CD14-positive monocyte (primary cell): ENCODE measurements at regions of chr19 and their contacts with region 1.

Region 1: GRCh38 chr19:17539238-17540117 is 16.0 kb upstream of the COLGALT1 start:
- DNase-seq: peak; percentile 94 to 98 (median 97)
- H3K4me3 ChIP-seq: peak overlapping the region; percentile 33 to 74 (median 56)
- H3K4me3 Mint-ChIP-seq: peak overlapping the region; percentile 87 to 93
- H3K27ac ChIP-seq: no peak overlapping the region
- H3K27ac Mint-ChIP-seq: peak overlapping the region in 4 of 7 donors; percentile 44 to 83 (median 48)
- H3K4me1 ChIP-seq: peaks cover 16 to 25% of the 10 kb centered on the region in 2 donors
- H3K4me1 Mint-ChIP-seq: peaks cover 32% of the 10 kb centered on the region
- H3K27me3 ChIP-seq: no peaks in the 10 kb centered on the region
- H3K27me3 Mint-ChIP-seq: peaks cover 3 to 8% (median 7%) of the 10 kb centered on the region in 3 donors
- CTCF ChIP-seq: peak; percentile 44

Region 2: DNA sequence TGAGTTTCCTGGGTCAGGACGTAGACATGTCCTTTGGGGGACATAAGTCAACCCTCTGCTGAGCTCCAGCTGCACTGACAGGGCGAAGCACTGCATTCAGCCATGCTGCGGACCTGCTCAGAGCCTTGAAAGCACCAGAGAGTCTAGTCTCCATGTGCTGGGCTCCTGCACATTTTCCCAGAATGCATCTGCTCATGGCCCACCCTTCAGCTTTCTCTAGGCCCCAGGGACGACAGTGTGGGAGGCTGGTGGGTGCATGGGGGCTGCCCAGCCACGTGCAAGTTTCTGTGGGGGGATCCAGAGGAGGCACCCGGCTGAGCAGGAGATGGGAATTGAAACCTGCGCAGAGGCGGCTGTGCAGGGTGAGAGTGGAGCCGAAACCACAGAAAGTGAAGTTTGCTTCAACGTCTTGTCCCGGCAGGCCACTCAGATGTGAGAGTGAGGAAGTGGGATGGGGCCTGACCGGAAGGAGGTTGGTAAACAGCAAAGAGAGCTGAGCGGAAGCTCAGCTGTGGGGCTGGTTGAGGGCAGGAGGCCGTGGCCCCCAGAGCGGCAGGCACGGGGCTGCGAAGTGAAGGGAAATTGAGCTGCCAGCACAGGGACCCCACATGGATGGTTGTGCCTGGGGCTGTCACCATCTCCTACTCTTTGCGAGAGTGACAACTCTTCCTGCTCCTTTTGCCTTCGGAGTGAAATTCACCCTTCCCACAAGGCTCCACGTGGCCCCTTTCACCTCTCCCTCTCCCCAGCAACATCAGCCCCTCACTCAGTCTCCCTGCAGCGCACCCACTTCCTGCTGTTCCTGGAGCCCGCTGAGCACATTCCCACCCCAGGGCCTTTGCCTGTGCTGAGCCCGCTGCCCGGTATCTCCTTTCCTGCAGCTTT is 16.2 kb before region 1 on chr19:
- intact Hi-C with region 1: no loop called
- DNase-seq: peak; percentile 76 to 84 (median 83)
- H3K4me3 ChIP-seq: peak overlapping the region in 2 of 3 experiments; percentile 26 to 71
- H3K4me3 Mint-ChIP-seq: peak overlapping the region; percentile 76 to 88
- H3K27ac ChIP-seq: peak overlapping the region; percentile 88
- H3K27ac Mint-ChIP-seq: peak overlapping the region; percentile 87 to 96 (median 94)
- H3K4me1 ChIP-seq: peaks cover 30 to 49% of the 10 kb centered on the region in 2 donors
- H3K4me1 Mint-ChIP-seq: peaks cover 46% of the 10 kb centered on the region
- H3K27me3 ChIP-seq: no peaks in the 10 kb centered on the region
- H3K27me3 Mint-ChIP-seq: peaks cover 0 to 6% (median 4%) of the 10 kb centered on the region in 3 donors
- CTCF ChIP-seq: no peak

Region 3: GRCh38 chr19:17570791-17571190 is 31.3 kb after region 1 on chr19:
- intact Hi-C with region 1: loop called in 1 of 2 experiments (anchors 5 kb)
- DNase-seq: no peak
- H3K4me3 ChIP-seq: no peak overlapping the region
- H3K4me3 Mint-ChIP-seq: no peak overlapping the region
- H3K27ac ChIP-seq: no peak overlapping the region
- H3K27ac Mint-ChIP-seq: peak overlapping the region in 2 of 7 donors; percentile 10 to 30
- H3K4me1 ChIP-seq: peaks cover 2 to 5% of the 10 kb centered on the region in 2 donors
- H3K4me1 Mint-ChIP-seq: peaks cover 2% of the 10 kb centered on the region
- H3K27me3 ChIP-seq: no peaks in the 10 kb centered on the region
- H3K27me3 Mint-ChIP-seq: peaks cover 0 to 2% (median 0%) of the 10 kb centered on the region in 3 donors
- CTCF ChIP-seq: no peak

Region 4: DNA sequence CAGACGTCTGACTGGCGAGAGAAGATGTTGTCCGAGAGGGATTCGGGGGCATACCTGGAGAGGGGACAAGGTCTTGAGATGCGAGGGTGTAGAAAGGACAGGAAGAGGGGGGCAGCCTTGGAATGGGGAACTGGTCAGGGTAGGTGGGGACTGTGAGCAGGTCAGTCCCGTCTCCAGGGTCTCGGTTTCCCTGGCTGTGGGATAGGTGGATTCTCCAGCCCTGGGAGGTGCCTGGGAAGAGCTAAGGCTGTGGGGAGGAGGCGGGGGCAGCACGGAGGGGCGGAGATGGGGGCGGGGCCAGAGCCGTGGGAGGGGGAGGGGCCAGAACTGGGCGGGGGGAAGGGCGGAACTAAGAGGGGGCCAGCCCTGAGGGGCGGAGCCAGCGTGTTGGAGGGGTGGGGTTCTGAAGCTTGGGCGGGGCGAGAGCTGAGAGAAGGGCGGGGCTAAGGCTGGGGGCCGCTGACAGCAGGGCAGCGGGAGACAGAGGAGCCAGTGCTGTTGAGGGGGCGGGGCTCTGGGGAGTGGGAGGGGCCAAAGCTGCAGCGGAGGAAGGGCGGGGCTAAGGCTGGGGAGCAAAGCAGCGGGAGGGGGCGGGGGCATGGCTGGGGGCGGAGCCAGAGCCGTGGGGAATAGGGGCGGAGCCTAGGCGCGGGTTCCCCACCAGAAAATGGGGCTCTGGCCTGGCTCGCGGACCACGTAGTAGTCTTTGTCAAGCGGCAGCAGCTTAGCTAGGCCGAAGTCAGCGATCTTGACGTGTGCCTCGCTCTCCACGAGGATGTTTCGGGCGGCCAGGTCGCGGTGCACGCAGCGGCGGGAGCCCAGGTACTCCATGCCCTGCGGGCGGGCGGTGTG is 291.3 kb after region 1 on chr19:
- intact Hi-C with region 1: no loop called
- DNase-seq: no peak
- H3K4me3 ChIP-seq: no peak overlapping the region
- H3K4me3 Mint-ChIP-seq: no peak overlapping the region
- H3K27ac ChIP-seq: no peak overlapping the region
- H3K27ac Mint-ChIP-seq: peak overlapping the region in 2 of 7 donors; percentile 31 to 64
- H3K4me1 ChIP-seq: peaks cover 12 to 17% of the 10 kb centered on the region in 2 donors
- H3K4me1 Mint-ChIP-seq: peaks cover 11% of the 10 kb centered on the region
- H3K27me3 ChIP-seq: no peaks in the 10 kb centered on the region
- H3K27me3 Mint-ChIP-seq: no peaks in the 10 kb centered on the region
- CTCF ChIP-seq: no peak